Body of pancreas (tissue), 4 donors: ENCODE measurements at regions of chr4 and their contacts with region 1.

Region 1: DNA sequence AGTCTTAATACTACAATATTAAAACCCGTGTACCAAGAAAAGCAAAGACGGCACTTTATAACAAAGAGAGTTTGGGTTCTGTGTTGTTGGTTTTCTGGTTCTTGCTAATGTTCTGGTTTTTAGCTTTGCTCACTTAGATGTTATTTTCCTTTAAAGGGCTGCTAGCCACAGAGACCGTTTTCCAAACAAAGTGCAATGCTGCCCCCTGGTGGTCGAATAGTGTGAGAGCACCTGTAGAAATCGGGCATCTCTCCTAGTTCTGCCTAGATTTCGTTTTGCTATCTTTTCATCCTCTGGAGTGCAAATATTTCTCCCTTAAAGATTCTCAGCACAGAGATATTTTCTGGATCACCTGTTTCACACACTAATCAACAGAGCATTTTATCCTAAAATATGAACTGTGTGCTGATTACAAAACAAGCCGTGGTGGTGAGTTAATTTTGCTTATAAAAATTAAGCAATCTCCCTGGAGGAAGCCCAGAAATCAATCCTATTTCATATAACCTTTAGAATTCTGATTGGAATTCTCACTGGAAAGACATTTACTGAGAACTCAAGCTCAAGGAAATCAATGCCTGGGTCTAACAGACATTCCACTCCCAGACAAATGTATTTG is 334.5 kb upstream of the NOCT start:
- DNase-seq: peak; percentile 81 to 86 (median 84)
- ATAC-seq: peak; percentile 79
- H3K4me3 ChIP-seq: no peak overlapping the region
- H3K27ac ChIP-seq: no peak overlapping the region
- H3K4me1 ChIP-seq: no peaks in the 10 kb centered on the region
- H3K27me3 ChIP-seq: no peaks in the 10 kb centered on the region
- CTCF ChIP-seq: peak; percentile 68 to 97 (median 86)
- POLR2A ChIP-seq: no peak

Region 2: DNA sequence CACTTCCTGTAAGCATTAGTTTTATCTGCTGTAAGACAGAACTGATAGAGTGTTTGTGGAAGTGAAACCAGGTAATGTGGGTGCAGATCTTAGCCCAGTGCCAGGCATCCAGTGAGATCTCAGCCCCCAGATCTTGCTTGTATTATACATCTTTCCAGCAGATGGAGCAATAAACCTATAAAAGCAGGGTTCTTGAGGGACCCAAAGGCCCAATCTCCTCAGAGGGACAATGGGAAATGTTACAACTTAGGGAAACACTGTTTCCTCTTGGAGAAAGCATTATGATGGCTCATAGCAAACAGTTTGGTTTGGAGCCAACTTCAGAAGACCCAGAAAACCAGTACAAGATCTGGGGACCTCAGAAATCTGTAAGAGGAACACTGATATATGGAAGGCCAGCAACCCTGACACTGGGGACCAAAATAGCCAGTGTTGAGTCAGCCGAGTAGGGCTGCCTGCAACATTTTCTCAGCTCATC is 645.3 kb before region 1 on chr4:
- intact Hi-C with region 1: loop called (anchors 10 kb)
- DNase-seq: peak in 2 of 4 donors; percentile 13 to 14
- ATAC-seq: peak; percentile 73
- H3K4me3 ChIP-seq: no peak overlapping the region
- H3K27ac ChIP-seq: no peak overlapping the region
- H3K4me1 ChIP-seq: no peaks in the 10 kb centered on the region
- H3K27me3 ChIP-seq: no peaks in the 10 kb centered on the region
- CTCF ChIP-seq: peak in 6 of 7 experiments; percentile 35 to 68 (median 56)
- POLR2A ChIP-seq: no peak

Region 3: GRCh38 chr4:138522366-138522765 is 158.7 kb before region 1 on chr4:
- intact Hi-C with region 1: no loop called
- DNase-seq: peak in 1 of 4 donors; percentile 1
- ATAC-seq: peak; percentile 38
- H3K4me3 ChIP-seq: no peak overlapping the region
- H3K27ac ChIP-seq: no peak overlapping the region
- H3K4me1 ChIP-seq: no peaks in the 10 kb centered on the region
- H3K27me3 ChIP-seq: no peaks in the 10 kb centered on the region
- CTCF ChIP-seq: peak in 4 of 7 experiments; percentile 17 to 38 (median 31)
- POLR2A ChIP-seq: no peak

Region 4: DNA sequence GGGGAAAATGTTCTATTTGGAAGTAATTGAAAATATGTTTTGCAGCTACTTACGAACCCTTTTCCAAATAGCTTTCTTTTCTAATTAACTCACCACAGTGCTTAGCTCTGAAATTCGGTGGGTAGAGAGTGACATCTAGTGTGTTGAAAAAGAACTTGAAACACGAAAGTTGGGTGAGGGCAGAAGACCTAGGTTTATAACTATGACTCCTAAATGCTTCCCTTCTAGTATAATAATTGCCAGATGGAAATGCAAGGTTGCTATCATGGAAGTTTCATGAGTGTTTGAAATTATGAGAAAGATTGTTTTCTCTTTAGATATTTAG is 257.2 kb after region 1 on chr4:
- intact Hi-C with region 1: no loop called
- DNase-seq: no peak
- ATAC-seq: no peak
- H3K4me3 ChIP-seq: no peak overlapping the region
- H3K27ac ChIP-seq: no peak overlapping the region
- H3K4me1 ChIP-seq: no peaks in the 10 kb centered on the region
- H3K27me3 ChIP-seq: no peaks in the 10 kb centered on the region
- CTCF ChIP-seq: peak in 6 of 7 experiments; percentile 8 to 57 (median 42)
- POLR2A ChIP-seq: no peak